Mammary epithelial cell (primary cell): ENCODE measurements at regions of chr5 and their contacts with region 1.

Region 1: GRCh38 chr5:43769571-43770355 is 166.8 kb downstream of the NNT start:
- DNase-seq: peak; percentile 13
- H3K4me3 ChIP-seq: no peak overlapping the region
- H3K27ac ChIP-seq: no peak overlapping the region
- H3K4me1 ChIP-seq: peaks cover 31% of the 10 kb centered on the region
- H3K27me3 ChIP-seq: no peaks in the 10 kb centered on the region
- CTCF ChIP-seq: no peak

Region 2: DNA sequence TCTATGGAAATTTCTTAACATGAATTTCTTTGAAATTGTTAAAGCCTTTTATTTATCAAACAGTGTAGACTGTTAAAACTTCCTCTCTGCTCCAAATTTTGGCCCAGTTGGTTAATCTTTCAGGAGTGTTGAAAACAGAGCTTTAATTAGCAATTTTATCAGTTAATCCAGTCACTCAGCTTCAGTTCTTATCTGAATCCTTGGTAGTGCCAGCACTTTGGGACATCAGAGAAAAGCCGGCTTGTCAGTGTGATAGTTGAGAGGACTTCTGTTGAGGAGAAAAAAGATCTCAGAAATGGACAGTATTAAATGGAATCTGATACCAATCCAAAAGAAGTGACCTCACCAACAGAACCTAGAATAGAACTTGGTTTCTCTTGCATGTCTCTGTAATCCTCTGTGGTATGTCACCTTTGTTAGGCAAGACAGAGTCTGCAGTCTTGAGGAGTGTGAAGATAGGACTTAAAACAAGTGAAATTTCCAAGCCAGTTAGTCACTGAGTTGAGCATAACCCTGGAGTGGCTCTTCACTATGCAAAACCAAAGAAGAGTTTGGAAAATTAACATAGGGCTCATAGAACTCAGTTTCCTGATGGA is 85.0 kb after region 1 on chr5:
- CTCF ChIA-PET with region 1: no interaction called
- dilution Hi-C with region 1: no loop called
- in situ Hi-C with region 1: no loop called
- intact Hi-C with region 1: loop called (anchors 5 kb)
- DNase-seq: no peak
- H3K4me3 ChIP-seq: no peak overlapping the region
- H3K27ac ChIP-seq: no peak overlapping the region
- H3K4me1 ChIP-seq: no peaks in the 10 kb centered on the region
- H3K27me3 ChIP-seq: no peaks in the 10 kb centered on the region
- CTCF ChIP-seq: no peak

Region 3: DNA sequence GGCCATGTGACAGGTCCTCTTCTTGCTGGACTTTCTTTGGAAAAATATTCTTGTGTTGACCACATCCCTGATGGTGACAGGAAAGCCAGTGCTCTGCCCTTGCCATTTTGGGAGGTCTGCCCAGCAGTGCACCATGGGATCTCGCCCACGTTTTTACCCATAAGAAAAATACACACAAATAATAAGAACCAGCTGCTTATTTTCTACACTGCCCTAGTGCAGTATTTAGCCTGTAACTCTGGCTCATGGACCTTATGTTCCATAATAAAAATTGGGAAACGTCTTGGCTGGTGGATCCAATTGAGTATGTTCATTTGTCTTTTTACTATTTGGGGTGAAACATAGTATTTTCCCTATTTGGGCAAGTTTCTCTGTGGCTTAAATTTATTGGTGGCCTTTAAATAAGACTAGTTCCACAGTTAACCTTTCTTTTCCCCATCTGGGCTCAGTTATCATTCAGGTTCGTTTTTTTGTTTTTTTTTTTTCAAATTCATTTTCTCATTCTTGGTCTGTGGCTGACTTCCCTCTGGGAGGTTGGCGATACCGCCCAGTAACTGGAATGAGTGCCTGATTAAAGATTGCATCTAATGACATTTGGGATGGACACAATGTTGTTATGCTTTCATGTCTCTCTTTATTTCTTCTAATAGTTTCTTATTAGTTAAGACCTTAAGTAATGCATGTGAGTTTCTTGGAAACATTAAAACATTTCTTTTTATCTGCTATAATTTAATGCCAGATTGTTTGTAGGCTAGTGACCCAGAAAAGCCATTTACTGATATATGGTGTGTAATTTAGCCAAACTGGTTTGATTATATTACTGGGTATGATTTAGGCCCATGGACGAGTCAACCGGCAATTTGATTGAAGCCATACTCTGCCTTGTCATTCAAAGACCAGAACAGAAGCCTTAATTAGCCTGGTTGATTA is 455.7 kb after region 1 on chr5:
- CTCF ChIA-PET with region 1: no interaction called
- dilution Hi-C with region 1: no loop called
- in situ Hi-C with region 1: no loop called
- intact Hi-C with region 1: no loop called
- DNase-seq: no peak
- H3K4me3 ChIP-seq: no peak overlapping the region
- H3K27ac ChIP-seq: no peak overlapping the region
- H3K4me1 ChIP-seq: no peaks in the 10 kb centered on the region
- H3K27me3 ChIP-seq: no peaks in the 10 kb centered on the region
- CTCF ChIP-seq: no peak